ENCODE measurements at regions of chr19 and their contacts with region 1.

Region 1: GRCh38 chr19:18192673-18193387 is at the start of gene MPV17L2:
- DNase-seq: peak; percentile 99
- H3K4me3 Mint-ChIP-seq: peak within 1 kb of the TSS; percentile 83
- H3K27ac Mint-ChIP-seq: peak within 1 kb of the TSS; percentile 90
- H3K4me1 Mint-ChIP-seq: peaks cover 20% of the 10 kb centered on the region
- H3K27me3 Mint-ChIP-seq: no peaks in the 10 kb centered on the region
- total RNA-seq, gene MPV17L2: 19.2 and 23.3 TPM in 2 replicates

Region 2: DNA sequence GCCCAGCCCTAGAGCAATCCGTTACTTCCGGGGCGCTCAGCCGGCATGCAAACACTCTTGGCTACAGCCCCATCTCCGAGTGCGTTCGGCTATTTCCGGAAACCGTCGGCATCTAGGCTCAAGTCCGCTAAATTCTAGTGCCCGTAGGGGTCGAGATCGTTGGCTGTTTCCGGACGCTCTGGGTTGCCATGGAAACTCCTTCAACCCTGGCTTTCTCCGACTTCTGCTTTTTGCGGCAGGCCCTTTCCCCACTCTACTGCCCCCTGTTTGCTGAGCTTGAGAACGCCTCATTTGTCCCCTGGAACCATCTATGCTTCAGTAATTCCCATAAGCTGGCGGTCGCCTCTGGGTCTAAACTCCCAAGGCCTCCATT is 40.4 kb before region 1 on chr19:
- intact Hi-C with region 1: loop called (anchors 1 kb)
- DNase-seq: peak; percentile 95
- H3K4me3 Mint-ChIP-seq: peak overlapping the region; percentile 84
- H3K27ac Mint-ChIP-seq: peak overlapping the region; percentile 96
- H3K4me1 Mint-ChIP-seq: peaks cover 23% of the 10 kb centered on the region
- H3K27me3 Mint-ChIP-seq: peaks cover 3% of the 10 kb centered on the region

Region 3: GRCh38 chr19:18173572-18174288 is 19.1 kb before region 1 on chr19 and contains the start of gene IFI30:
- intact Hi-C with region 1: loop called (anchors 1 kb)
- DNase-seq: peak; percentile 65
- H3K4me3 Mint-ChIP-seq: peak within 1 kb of the TSS; percentile 91
- H3K27ac Mint-ChIP-seq: peak within 1 kb of the TSS; percentile 72
- H3K4me1 Mint-ChIP-seq: peaks cover 27% of the 10 kb centered on the region
- H3K27me3 Mint-ChIP-seq: peaks cover 3% of the 10 kb centered on the region
- total RNA-seq, gene IFI30: 45.3 and 49.9 TPM in 2 replicates

Region 4: GRCh38 chr19:18281082-18282020 is 88.5 kb after region 1 on chr19 and contains the start of gene JUND:
- intact Hi-C with region 1: loop called (anchors 2 kb)
- DNase-seq: peak; percentile 98
- H3K4me3 Mint-ChIP-seq: peak within 1 kb of the TSS; percentile 88
- H3K27ac Mint-ChIP-seq: peak within 1 kb of the TSS; percentile 98
- H3K4me1 Mint-ChIP-seq: peaks cover 49% of the 10 kb centered on the region
- H3K27me3 Mint-ChIP-seq: no peaks in the 10 kb centered on the region
- total RNA-seq, gene JUND: 431 and 455 TPM in 2 replicates

Region 5: GRCh38 chr19:18322759-18323460 is 130.1 kb after region 1 on chr19 and contains the start of gene LSM4:
- intact Hi-C with region 1: loop called (anchors 1 kb)
- DNase-seq: peak; percentile 99
- H3K4me3 Mint-ChIP-seq: peak within 1 kb of the TSS; percentile 95
- H3K27ac Mint-ChIP-seq: peak within 1 kb of the TSS; percentile 93
- H3K4me1 Mint-ChIP-seq: peaks cover 53% of the 10 kb centered on the region
- H3K27me3 Mint-ChIP-seq: no peaks in the 10 kb centered on the region
- total RNA-seq, gene LSM4: 198 and 200 TPM in 2 replicates

Region 6: GRCh38 chr19:18542936-18543815 is 350.3 kb after region 1 on chr19 and contains the start of gene FKBP8:
- intact Hi-C with region 1: loop called (anchors 5 kb)
- DNase-seq: peak; percentile 92
- H3K4me3 Mint-ChIP-seq: peak within 1 kb of the TSS; percentile 92
- H3K27ac Mint-ChIP-seq: peak within 1 kb of the TSS; percentile 99
- H3K4me1 Mint-ChIP-seq: peaks cover 27% of the 10 kb centered on the region
- H3K27me3 Mint-ChIP-seq: peaks cover 4% of the 10 kb centered on the region
- total RNA-seq, gene FKBP8: 163 and 167 TPM in 2 replicates